A673 (cell line): ENCODE measurements at regions of chr12 and their contacts with region 1.

Region 1: DNA sequence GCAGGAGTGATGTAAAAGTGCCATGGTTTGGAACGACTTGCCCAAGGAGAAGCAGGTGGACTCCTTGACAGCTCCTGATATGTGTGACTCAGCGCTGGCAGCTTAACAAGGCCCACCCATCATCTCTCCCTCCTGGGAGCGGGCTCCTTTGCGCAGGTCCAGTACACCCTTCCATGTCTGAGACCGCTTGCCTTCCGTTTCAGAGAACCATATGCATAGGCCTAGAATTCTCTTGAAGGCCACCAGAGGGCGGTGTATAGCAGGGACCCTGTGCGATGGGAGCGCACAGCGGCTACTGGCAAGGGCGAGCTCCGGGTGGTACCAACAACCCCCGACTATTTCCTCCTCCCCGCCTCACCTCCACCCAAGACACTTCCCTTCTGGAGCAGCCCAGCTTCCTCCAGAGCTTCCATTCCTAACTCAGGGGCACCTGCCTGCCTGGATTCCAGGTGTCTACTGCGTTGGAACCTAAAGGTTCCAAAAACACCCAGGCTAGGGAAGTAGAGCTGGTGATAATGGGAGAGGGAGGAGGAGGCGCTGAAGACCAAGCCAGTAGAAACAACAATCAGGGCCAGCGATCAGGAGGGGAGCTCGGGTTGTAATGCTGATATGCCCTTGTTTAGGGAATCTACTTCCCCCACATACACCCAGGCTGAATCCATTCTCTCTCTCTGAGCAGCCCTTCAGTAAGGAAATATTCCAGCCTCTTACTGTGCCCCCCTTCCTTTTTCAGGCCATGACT is 6.2 kb downstream of the DHH start:
- DNase-seq: peak; percentile 93
- H3K4me3 ChIP-seq: peak overlapping the region; percentile 34
- H3K27ac ChIP-seq: no peak overlapping the region
- H3K4me1 ChIP-seq: peaks cover 9% of the 10 kb centered on the region
- H3K27me3 ChIP-seq: peaks cover 48% of the 10 kb centered on the region
- CTCF ChIP-seq: peak; percentile 96

Region 2: DNA sequence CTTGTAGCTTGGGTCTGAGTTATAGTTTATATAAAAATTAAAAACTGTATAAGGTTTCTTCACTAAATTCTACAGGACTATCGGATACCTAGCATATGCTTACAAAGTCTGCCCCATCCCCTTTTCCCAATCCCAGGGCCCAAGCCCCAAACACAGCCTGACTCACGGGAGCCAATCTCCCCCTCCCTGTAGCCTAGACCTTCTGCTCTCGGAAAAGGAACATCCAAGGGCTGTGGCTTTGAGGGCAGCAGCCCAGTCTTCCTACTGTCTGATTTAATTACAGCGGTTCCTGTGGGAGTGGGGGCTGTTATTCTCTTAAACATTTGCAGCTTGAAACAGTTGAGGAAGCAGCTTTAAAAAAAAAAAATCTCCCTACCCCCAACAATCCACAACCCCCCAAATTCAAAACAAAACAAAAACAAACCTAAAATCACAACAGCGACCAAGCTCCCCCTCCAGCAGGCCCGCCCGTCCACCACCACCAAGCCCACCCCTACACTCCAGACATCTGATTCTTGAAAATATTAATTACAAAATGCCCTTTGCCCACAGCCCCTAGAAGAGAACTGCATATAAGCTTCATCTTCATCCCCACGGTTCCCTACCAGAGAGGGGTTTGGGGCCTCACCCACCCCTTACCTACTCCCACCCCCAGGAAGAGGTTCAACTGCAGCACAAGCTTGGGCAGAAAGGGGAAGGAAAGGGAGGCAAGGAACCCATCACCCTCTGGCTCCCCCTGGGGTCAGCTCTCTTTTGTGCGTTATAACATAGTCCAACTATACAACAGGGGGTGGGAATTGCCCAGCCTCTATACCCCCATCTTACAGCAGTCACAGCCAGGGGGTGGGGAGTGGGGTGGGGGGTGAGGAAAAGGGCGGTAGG is 68.7 kb before region 1 on chr12:
- CTCF ChIA-PET with region 1: no interaction called
- POLR2A ChIA-PET with region 1: interaction called, 10 read pairs
- intact Hi-C with region 1: no loop called
- DNase-seq: peak; percentile 61
- H3K4me3 ChIP-seq: peak overlapping the region; percentile 82
- H3K27ac ChIP-seq: peak overlapping the region; percentile 95
- H3K4me1 ChIP-seq: peaks cover 16% of the 10 kb centered on the region
- H3K27me3 ChIP-seq: no peaks in the 10 kb centered on the region
- CTCF ChIP-seq: peak; percentile 48

Region 3: DNA sequence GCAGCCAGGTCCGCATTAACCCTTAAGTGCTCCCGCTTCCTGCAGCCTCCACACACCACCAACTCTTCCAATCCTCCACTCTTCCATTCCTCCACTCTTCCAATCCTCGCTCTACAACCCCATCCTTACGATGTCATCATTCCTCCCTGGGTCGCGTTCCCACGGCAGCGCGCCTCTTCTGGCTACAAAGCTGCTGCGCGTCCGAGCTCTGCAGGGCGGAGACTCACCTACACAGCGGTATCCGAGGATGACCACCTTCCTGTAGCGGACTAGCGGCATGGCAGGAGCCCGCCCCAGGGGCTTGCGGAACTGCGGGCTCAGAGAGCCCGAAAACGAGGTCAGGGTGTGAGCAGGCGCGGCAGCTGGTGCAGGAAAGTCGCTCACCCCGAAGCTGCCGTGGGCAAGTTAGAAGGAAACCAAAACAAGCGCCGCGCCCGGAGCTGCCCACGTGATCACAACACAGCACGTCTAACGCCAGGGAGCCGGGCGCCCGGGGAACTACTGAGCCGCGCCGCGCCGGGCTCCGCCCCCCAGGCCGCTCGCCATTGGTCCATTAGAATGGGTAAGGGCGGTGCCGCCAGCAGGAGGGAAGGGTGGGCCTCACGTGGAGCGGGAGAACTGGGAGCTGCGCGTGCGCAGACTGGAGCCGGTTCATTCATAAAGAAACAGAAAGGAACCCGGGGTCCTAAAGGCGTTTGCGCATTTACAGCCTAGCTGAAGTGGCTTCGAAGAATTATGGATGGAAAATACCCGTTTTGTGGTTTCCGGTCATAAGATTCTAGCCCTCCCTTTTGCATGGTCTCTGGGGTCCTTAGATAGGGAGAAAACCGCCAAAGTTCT is 18.6 kb before region 1 on chr12 and contains the start of gene RHEBL1:
- CTCF ChIA-PET with region 1: interaction called, 17 read pairs
- POLR2A ChIA-PET with region 1: interaction called, 3 read pairs
- intact Hi-C with region 1: no loop called
- DNase-seq: peak; percentile 99
- H3K4me3 ChIP-seq: peak within 1 kb of the TSS; percentile 94
- H3K27ac ChIP-seq: peak within 1 kb of the TSS; percentile 21
- H3K4me1 ChIP-seq: no peaks in the 10 kb centered on the region
- H3K27me3 ChIP-seq: no peaks in the 10 kb centered on the region
- CTCF ChIP-seq: 0 out of 2 replicates have a peak, but pooled peaks have one; percentile 29
- total RNA-seq, gene RHEBL1: 1.3 and 1.6 TPM in 2 replicates

Region 4: DNA sequence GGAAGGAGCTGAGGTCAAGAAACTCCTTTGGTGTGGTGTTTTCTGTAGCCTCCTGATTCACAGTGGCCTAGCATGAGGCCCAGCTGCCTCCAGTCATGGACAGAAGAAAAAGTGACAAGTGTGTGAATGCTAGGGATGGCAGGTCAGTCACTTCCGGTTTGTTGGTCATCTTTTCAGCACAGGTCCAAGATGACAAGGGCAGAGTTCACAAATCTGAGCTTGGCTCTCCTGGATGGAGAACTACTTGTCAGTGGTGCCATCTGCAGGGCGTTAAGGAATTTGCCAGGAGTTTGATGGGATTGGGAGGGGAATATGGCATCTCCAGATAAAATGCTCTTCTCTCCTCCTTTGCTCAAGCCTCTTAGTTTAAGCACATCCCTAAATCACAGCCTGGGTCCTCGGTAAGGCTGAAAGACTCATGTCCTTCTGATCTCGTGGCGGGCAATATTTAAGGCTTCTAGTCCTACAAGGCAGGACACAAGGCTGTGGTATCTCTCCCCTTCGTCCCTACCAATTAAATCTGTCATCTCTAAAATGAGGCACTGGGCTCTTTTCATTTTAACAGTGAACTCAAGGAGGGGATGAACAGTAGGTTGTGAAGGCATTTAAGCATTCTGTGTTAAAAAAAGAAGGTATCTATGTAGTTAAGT is 32.8 kb after region 1 on chr12:
- CTCF ChIA-PET with region 1: interaction called, 34 read pairs
- POLR2A ChIA-PET with region 1: interaction called, 4 read pairs
- intact Hi-C with region 1: loop called (anchors 2 kb)
- DNase-seq: peak; percentile 53
- H3K4me3 ChIP-seq: no peak overlapping the region
- H3K27ac ChIP-seq: no peak overlapping the region
- H3K4me1 ChIP-seq: no peaks in the 10 kb centered on the region
- H3K27me3 ChIP-seq: no peaks in the 10 kb centered on the region
- CTCF ChIP-seq: peak; percentile 72

Region 5: DNA sequence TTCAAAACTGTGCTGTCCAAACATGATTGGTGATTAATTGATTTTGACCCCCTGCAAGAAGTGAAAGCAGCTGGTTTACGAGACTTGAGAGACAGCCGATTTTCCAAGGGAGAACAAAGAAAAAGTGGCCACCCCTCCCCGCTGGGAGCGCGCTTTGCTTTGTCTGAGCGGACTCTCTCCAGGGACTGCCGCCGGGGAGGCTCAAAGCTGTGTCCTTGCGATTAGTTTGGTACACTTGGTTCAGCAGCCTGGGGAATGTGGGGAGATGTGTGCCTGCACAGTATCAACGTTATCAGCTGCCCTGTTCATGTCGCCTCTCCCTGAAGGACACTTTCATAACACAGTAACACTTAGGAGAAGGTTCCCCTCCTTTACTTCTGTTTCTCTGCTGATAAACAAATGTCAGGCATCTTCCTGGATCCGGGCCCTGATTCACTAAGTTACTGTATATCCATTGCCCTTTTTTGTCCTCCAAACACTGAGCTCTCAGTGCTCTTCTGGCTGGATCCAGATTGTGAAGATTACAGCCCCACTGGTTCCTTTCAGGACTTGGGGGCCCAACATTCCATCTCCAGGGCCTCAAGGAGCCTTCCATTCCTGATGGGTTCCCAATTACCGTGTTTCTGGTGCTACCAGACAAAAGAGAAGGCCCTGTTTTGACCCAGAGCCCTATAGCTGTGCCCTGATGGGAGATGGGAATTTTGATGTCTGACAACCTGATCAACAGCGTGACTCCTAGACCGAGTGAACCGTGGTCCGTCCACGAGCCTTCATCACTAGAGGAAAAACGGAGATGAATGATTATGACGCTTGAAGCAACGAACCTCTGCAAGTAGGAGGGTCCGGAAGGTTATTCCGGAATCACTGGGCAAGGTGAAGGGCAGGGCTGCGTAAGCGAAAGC is 144.8 kb after region 1 on chr12:
- CTCF ChIA-PET with region 1: interaction called, 25 read pairs
- POLR2A ChIA-PET with region 1: no interaction called
- intact Hi-C with region 1: loop called (anchors 1 kb)
- DNase-seq: peak; percentile 89
- H3K4me3 ChIP-seq: peak overlapping the region; percentile 9
- H3K27ac ChIP-seq: peak overlapping the region; percentile 60
- H3K4me1 ChIP-seq: peaks cover 21% of the 10 kb centered on the region
- H3K27me3 ChIP-seq: no peaks in the 10 kb centered on the region
- CTCF ChIP-seq: peak; percentile 29; the same call in 1 of the 2 replicates

Region 6: DNA sequence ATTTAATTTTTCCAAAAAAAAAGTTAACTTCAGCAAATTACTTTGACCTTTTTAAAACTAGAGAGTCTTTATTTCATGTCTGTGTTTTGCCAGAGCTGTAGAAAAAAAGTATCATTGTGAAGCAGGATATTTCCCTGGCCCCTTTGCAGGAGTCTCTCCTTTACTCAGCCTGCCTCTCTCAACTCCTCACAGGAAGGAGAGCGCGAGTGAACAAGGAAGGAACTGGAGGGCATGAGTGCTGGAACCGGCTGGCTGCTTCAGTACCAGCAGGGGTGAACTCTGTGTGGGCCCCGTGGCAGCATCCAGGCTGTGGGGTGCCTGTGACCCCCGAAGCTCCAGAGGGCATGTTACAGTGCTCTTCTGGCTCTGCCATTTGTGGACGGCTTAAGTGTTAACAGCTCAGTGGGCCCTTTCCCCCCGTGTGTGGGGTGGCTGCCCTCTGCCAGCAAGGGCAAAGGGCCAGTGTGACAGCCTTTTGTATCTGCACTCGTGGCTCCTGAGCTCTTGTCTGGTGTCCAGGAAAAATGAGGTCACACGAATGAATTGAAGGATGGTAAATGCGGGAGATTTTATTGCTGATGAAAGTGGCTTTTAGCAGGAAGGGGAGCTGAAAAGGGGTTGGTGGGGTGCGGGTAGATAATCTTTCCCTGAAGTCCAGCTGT is 373.9 kb after region 1 on chr12:
- CTCF ChIA-PET with region 1: no interaction called
- POLR2A ChIA-PET with region 1: no interaction called
- intact Hi-C with region 1: no loop called
- DNase-seq: no peak
- H3K4me3 ChIP-seq: no peak overlapping the region
- H3K27ac ChIP-seq: no peak overlapping the region
- H3K4me1 ChIP-seq: no peaks in the 10 kb centered on the region
- H3K27me3 ChIP-seq: no peaks in the 10 kb centered on the region
- CTCF ChIP-seq: no peak